Tibial artery (tissue), 4 donors: ENCODE measurements at regions of chr2 and their contacts with region 1.

Region 1: GRCh38 chr2:84495539-84496146 is 20.7 kb upstream of the DNAH6 start:
- DNase-seq: no peak
- H3K4me3 ChIP-seq: no peak overlapping the region
- H3K27ac ChIP-seq: no peak overlapping the region
- H3K4me1 ChIP-seq: no peaks in the 10 kb centered on the region
- H3K27me3 ChIP-seq: no peaks in the 10 kb centered on the region
- CTCF ChIP-seq: peak; percentile 57 to 71

Region 2: DNA sequence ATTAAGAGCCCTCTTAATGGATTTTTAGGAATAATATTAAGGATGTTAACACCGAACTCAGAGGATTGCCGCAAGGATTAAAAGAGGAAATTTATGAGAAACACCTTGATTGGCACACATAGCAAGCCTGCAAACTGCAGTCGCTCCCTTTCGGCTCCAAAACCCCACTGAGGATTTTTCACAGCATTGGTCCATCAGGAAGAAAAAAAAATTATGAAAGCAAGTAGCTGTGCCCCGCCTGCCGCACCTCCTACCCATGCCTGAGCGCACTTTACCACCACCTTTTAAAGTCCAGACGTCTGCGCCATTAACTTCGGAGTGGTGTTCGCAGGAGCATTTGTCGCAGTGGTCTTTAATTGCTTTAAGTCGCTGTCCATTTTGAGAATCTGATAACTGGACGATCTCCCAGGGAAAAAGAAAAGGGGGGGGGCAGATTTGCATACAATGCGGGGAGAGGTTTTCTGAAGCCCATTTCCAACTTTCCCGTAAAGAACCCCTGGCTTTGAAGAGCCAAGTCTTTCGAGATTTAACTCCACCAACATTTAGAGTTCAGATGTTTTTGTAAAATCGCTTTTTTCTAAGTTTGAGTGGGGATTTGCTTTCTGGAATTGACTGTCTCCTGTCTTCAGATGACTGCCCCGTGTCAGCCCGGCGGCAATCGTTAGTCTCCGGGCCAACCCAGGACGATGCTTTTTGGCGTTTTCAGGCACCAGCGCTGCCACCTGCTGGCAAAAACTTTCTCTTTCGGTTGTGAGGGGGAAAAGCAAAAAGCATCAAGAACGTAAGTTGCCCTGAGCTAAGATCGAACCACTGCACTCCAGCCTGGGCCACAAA is 386.2 kb after region 1 on chr2:
- intact Hi-C with region 1: loop called (anchors 5 kb)
- DNase-seq: peak; percentile 76 to 88
- H3K4me3 ChIP-seq: peak overlapping the region; percentile 38 to 48
- H3K27ac ChIP-seq: no peak overlapping the region
- H3K4me1 ChIP-seq: peaks cover 0 to 32% (median 18%) of the 10 kb centered on the region in 4 donors
- H3K27me3 ChIP-seq: peaks cover 0 to 37% of the 10 kb centered on the region in 2 donors
- CTCF ChIP-seq: peak; percentile 64 to 68